ENCODE measurements at regions of chr19 and their contacts with region 1.

Region 1: GRCh38 chr19:42283143-42284065 is 14.4 kb downstream of the CIC start:
- H3K4me3 Mint-ChIP-seq: no peak overlapping the region
- H3K27ac Mint-ChIP-seq: no peak overlapping the region
- H3K4me1 Mint-ChIP-seq: peaks cover 48% of the 10 kb centered on the region
- H3K27me3 Mint-ChIP-seq: no peaks in the 10 kb centered on the region

Region 2: GRCh38 chr19:42132851-42133528 is 150.4 kb before region 1 on chr19:
- intact Hi-C with region 1: loop called (anchors 5 kb)
- H3K4me3 Mint-ChIP-seq: peak overlapping the region; percentile 89
- H3K27ac Mint-ChIP-seq: peak overlapping the region; percentile 58
- H3K4me1 Mint-ChIP-seq: peaks cover 65% of the 10 kb centered on the region
- H3K27me3 Mint-ChIP-seq: no peaks in the 10 kb centered on the region

Region 3: GRCh38 chr19:42229855-42230351 is 53.5 kb before region 1 on chr19:
- intact Hi-C with region 1: no loop called
- H3K4me3 Mint-ChIP-seq: no peak overlapping the region
- H3K27ac Mint-ChIP-seq: no peak overlapping the region
- H3K4me1 Mint-ChIP-seq: peaks cover 46% of the 10 kb centered on the region
- H3K27me3 Mint-ChIP-seq: no peaks in the 10 kb centered on the region

Region 4: GRCh38 chr19:42244347-42245220 is 38.8 kb before region 1 on chr19:
- intact Hi-C with region 1: loop called (anchors 2 kb)
- H3K4me3 Mint-ChIP-seq: peak overlapping the region; percentile 91
- H3K27ac Mint-ChIP-seq: peak overlapping the region; percentile 91
- H3K4me1 Mint-ChIP-seq: peaks cover 53% of the 10 kb centered on the region
- H3K27me3 Mint-ChIP-seq: no peaks in the 10 kb centered on the region

Region 5: GRCh38 chr19:42254989-42255765 is 28.2 kb before region 1 on chr19 and contains the start of gene ERF:
- intact Hi-C with region 1: loop called (anchors 1 kb)
- H3K4me3 Mint-ChIP-seq: peak within 1 kb of the TSS; percentile 88
- H3K27ac Mint-ChIP-seq: peak within 1 kb of the TSS; percentile 88
- H3K4me1 Mint-ChIP-seq: peaks cover 47% of the 10 kb centered on the region
- H3K27me3 Mint-ChIP-seq: peaks cover 20% of the 10 kb centered on the region

Region 6: DNA sequence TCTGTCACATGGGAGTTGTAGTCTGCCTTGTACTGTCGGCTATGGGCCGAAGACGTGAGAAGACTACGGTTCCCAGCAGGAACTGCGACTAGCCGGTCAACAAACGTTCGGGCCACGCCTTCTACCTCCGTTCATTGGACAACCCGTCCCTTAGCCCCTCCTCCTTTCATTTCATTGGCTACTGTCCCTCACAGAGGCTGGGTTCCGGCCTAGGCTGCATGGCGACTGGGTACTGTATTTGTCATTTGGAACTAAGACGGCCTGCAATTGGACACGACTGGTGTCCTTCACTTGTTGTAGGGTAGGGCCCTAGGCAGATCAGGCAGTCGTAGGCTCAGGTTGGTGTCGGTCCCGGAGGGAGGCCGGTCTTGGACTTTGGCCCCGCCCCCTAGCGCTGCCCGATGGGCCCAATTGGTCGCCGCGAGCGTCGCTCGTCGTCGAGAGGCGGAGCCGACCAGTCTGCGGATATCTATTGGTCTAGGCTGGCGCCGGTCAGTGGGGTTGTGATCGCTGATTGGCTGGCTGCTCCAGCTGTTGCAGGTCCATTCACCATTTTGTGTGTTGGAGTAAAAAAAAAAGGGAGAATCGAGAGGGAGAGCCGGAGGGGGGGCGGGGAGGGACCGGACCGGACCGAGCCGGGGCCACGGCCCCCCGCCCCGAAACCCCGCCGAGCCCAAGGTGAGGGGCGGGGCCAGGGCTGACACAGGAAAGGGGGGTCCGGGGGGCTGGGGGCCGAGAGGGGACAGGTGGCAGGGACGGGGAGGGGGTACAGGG is 14.5 kb before region 1 on chr19 and contains the start of gene CIC:
- intact Hi-C with region 1: loop called (anchors 2 kb)
- H3K4me3 Mint-ChIP-seq: peak within 1 kb of the TSS; percentile 90
- H3K27ac Mint-ChIP-seq: no peak within 1 kb of the TSS
- H3K4me1 Mint-ChIP-seq: peaks cover 40% of the 10 kb centered on the region
- H3K27me3 Mint-ChIP-seq: no peaks in the 10 kb centered on the region

Measured in dendritic cell treated with granulocyte-macrophage colony-stimulating factor and Interleukin-4, amounts not matched to agents 40 ng/mL and 50 ng/mL, for 4 days (primary cell).